B cell (primary cell): ENCODE measurements at regions of chr12 and their contacts with region 1.

Region 1: GRCh38 chr12:92987362-92987761 is 58.3 kb upstream of the EEA1 start:
- DNase-seq: peak; percentile 72
- ATAC-seq: peak; percentile 37
- H3K4me3 ChIP-seq: peak overlapping the region in 4 of 5 experiments; percentile 12 to 57 (median 34)
- H3K4me3 Mint-ChIP-seq: peak overlapping the region; percentile 80
- H3K27ac ChIP-seq: peak overlapping the region; percentile 66 to 77
- H3K27ac Mint-ChIP-seq: peak overlapping the region; percentile 92
- H3K4me1 ChIP-seq: peaks cover 21 to 31% of the 10 kb centered on the region in 2 donors
- H3K4me1 Mint-ChIP-seq: peaks cover 30% of the 10 kb centered on the region
- H3K27me3 ChIP-seq: no peaks in the 10 kb centered on the region
- H3K27me3 Mint-ChIP-seq: no peaks in the 10 kb centered on the region
- CTCF ChIP-seq: peak; percentile 81

Region 2: DNA sequence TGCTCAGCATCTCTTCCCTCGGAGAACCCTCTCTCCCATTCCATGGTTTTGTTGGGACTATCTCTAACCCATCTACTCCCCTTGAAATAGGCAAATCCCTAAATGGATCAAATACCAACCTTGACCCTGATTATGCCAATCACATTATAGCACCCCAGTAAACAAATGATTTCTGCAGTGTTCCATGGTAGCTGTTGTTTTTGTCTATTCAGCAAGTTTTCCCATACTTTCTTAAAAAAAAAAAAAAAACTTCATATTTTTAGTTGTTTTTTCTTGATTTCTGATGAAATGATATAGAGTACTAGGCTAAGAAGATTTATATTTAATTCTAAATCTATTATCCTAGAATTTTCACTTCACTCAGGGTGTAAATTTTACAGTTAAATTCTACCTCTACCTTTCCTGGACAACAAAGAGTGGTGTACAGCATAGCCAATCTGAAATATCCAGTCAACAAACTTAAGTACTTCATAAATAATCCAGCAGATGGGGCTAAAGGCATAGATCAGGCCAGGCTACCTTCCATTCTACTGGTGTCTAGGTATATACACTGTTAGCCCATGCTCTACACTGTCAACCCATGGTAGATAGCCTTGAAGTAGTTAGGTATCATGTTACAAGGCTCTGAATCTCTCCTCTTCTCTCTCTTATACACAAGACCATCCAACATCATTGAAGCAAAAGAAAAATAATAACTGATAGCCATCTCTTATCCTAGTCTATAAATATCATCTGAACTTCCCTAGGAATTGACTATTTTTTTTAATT is 202.4 kb before region 1 on chr12:
- CTCF ChIA-PET with region 1: interaction called, 23 read pairs
- POLR2A ChIA-PET with region 1: no interaction called
- intact Hi-C with region 1: loop called (anchors 2 kb)
- DNase-seq: peak; percentile 75
- ATAC-seq: peak; percentile 98
- H3K4me3 ChIP-seq: no peak overlapping the region
- H3K4me3 Mint-ChIP-seq: no peak overlapping the region
- H3K27ac ChIP-seq: no peak overlapping the region
- H3K27ac Mint-ChIP-seq: no peak overlapping the region
- H3K4me1 ChIP-seq: no peaks in the 10 kb centered on the region
- H3K4me1 Mint-ChIP-seq: no peaks in the 10 kb centered on the region
- H3K27me3 ChIP-seq: no peaks in the 10 kb centered on the region
- H3K27me3 Mint-ChIP-seq: no peaks in the 10 kb centered on the region
- CTCF ChIP-seq: peak; percentile 81

Region 3: DNA sequence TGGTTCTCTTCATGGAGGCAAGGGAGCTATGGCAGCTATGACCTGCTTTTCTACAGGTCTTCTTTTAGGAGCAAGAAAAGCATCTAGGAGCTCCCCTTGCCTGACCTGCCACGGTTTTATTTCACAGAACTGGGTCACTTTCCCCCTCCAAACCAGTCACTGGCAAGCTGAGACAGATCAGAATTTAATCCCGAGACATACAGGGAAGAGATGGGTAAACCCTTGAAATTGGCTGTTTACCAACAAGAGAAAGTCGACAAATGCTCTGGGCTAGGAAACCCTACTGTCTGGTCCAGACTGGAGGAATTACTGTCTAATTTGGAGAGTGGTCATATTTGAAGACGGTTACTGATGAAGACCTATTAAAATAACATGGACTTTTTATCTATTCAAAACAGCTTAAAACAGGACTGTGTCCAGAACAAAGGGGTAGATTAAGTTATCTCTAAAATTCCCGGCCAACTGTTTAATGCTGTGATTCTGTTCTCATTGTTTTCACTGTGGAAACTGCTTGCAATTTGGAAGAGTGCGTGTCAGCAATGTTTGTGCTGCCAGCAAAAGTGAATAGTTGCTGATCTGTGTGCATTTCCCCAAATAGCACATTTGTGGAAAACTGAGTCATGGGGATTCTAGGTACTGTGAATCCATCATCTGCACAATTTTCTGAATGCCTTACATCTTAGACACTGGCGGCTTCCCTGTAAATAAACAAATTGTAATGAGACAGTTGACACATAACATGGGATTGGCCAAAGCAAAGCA is 15.1 kb after region 1 on chr12:
- CTCF ChIA-PET with region 1: interaction called, 27 read pairs
- POLR2A ChIA-PET with region 1: interaction called, 3 read pairs
- intact Hi-C with region 1: no loop called
- DNase-seq: no peak
- ATAC-seq: no peak
- H3K4me3 ChIP-seq: no peak overlapping the region
- H3K4me3 Mint-ChIP-seq: no peak overlapping the region
- H3K27ac ChIP-seq: no peak overlapping the region
- H3K27ac Mint-ChIP-seq: no peak overlapping the region
- H3K4me1 ChIP-seq: no peaks in the 10 kb centered on the region
- H3K4me1 Mint-ChIP-seq: no peaks in the 10 kb centered on the region
- H3K27me3 ChIP-seq: no peaks in the 10 kb centered on the region
- H3K27me3 Mint-ChIP-seq: no peaks in the 10 kb centered on the region
- CTCF ChIP-seq: no peak

Region 4: DNA sequence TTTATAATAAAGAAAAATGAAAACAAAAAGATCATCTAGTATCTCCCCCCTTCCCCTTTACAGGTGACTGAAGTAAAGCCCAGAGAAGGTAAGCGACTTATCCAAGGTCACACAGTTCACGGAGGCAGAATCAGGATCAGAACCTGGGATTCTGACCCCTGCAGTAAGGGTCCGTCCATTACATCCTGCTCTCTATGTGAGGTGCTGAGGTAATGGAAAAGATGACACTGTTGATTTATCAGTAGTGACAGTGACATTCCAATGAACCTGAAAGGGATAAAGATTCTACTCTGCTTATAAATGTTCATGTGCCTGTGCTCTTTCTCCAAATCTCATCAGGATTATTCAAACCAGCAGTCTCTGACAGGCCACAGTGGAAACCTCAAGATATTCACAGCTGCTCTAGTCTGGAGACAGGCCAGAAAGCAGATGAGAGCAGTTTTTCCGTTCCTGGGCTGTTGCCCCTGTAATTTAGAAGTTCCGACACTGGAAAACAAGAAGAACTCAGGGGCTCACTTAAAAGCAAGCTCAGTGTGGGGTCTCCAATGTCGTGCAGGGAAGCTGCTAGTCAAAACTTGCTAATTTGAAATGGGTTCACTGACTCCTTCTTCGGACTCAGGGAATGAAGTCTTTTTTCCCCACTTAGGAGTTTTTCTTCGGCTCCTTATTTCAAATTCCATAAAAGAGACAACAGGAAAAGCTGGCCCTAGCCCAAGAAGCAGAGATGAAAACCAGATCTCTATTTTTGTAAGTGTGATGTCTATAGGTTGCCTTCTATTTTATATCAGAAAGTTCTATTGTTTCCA is 73.5 kb after region 1 on chr12:
- CTCF ChIA-PET with region 1: no interaction called
- POLR2A ChIA-PET with region 1: no interaction called
- intact Hi-C with region 1: loop called (anchors 5 kb)
- DNase-seq: no peak
- ATAC-seq: peak; percentile 23
- H3K4me3 ChIP-seq: no peak overlapping the region
- H3K4me3 Mint-ChIP-seq: no peak overlapping the region
- H3K27ac ChIP-seq: no peak overlapping the region
- H3K27ac Mint-ChIP-seq: no peak overlapping the region
- H3K4me1 ChIP-seq: peaks cover 14 to 20% of the 10 kb centered on the region in 2 donors
- H3K4me1 Mint-ChIP-seq: peaks cover 20% of the 10 kb centered on the region
- H3K27me3 ChIP-seq: peaks cover 0 to 7% (median 3%) of the 10 kb centered on the region in 4 experiments
- H3K27me3 Mint-ChIP-seq: peaks cover 24% of the 10 kb centered on the region
- CTCF ChIP-seq: no peak

Region 5: DNA sequence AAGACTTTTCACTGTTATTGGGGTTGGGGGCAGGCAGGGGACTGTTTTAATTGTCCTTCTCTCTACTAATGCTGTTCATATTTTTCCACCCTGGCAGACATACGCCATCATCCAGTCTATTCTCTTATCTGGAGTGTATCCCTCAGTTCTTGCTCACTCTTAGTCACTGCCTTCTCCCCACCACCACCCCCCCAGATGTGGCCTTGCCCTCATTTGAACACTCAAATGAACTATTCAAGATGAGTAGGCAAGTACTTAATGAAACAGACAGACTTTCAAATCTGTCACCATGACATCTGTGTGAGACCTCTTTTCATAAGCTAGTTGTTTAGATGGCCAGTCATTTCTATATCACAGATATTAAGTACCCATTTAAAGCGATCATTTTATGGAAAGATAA is 400.4 kb after region 1 on chr12:
- CTCF ChIA-PET with region 1: interaction called, 70 read pairs
- POLR2A ChIA-PET with region 1: no interaction called
- intact Hi-C with region 1: no loop called
- DNase-seq: no peak
- ATAC-seq: no peak
- H3K4me3 ChIP-seq: no peak overlapping the region
- H3K4me3 Mint-ChIP-seq: no peak overlapping the region
- H3K27ac ChIP-seq: no peak overlapping the region
- H3K27ac Mint-ChIP-seq: no peak overlapping the region
- H3K4me1 ChIP-seq: peaks cover 18 to 49% of the 10 kb centered on the region in 2 donors
- H3K4me1 Mint-ChIP-seq: peaks cover 56% of the 10 kb centered on the region
- H3K27me3 ChIP-seq: no peaks in the 10 kb centered on the region
- H3K27me3 Mint-ChIP-seq: no peaks in the 10 kb centered on the region
- CTCF ChIP-seq: no peak

Region 6: GRCh38 chr12:93419388-93420034 is 432.1 kb after region 1 on chr12:
- CTCF ChIA-PET with region 1: interaction called, 81 read pairs
- POLR2A ChIA-PET with region 1: no interaction called
- intact Hi-C with region 1: loop called (anchors 1 kb)
- DNase-seq: peak; percentile 72
- ATAC-seq: peak; percentile 74
- H3K4me3 ChIP-seq: no peak overlapping the region
- H3K4me3 Mint-ChIP-seq: peak overlapping the region; percentile 29
- H3K27ac ChIP-seq: peak overlapping the region in 1 of 2 donors; percentile 8
- H3K27ac Mint-ChIP-seq: peak overlapping the region; percentile 23
- H3K4me1 ChIP-seq: peaks cover 38 to 60% of the 10 kb centered on the region in 2 donors
- H3K4me1 Mint-ChIP-seq: peaks cover 83% of the 10 kb centered on the region
- H3K27me3 ChIP-seq: no peaks in the 10 kb centered on the region
- H3K27me3 Mint-ChIP-seq: no peaks in the 10 kb centered on the region
- CTCF ChIP-seq: peak; percentile 78